ENCODE measurements at regions of chr5 and their contacts with region 1.

Region 1: DNA sequence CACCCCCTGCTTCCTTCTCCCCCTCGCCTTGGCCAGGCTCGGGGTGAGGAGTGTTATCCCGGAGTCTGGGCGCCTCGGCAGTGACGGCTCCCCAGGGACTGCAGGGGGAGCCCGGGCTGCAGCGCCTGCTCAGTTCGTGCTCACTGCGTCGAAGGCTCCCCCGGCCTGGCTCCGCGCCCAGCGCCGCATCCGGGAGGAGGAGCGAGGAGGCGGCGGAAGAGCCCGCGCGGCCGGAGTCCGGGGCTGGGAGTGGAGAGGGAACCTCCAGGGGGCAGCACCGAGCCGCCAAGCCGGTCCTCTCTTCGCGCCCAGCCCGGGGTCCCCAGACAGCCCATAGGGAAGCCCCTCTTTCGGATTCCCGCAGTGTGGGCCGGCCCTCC is 1.3 kb upstream of the EGR1 start:
- DNase-seq: peak; percentile 80 to 91
- ATAC-seq: peak; percentile 53 to 58
- H3K4me3 ChIP-seq: peak overlapping the region; percentile 78 to 98 (median 90)
- H3K27ac ChIP-seq: peak overlapping the region; percentile 94 to 99 (median 96)
- H3K4me1 ChIP-seq: peaks cover 14 to 22% of the 10 kb centered on the region in 2 donors
- H3K27me3 ChIP-seq: peaks cover 0 to 6% (median 0%) of the 10 kb centered on the region in 3 donors
- CTCF ChIP-seq: peak; percentile 95 to 99 (median 96)
- POLR2A ChIP-seq: peak in 1 of 2 donors; percentile 26

Region 2: GRCh38 chr5:138491669-138492559 is 27.9 kb after region 1 on chr5:
- in situ Hi-C with region 1: no loop called
- intact Hi-C with region 1: loop called (anchors 1 kb)
- DNase-seq: peak; percentile 79 to 87
- ATAC-seq: peak; percentile 92 to 93
- H3K4me3 ChIP-seq: peak overlapping the region; percentile 60 to 85 (median 64)
- H3K27ac ChIP-seq: peak overlapping the region; percentile 34 to 63 (median 56)
- H3K4me1 ChIP-seq: peaks cover 14 to 17% of the 10 kb centered on the region in 2 donors
- H3K27me3 ChIP-seq: peaks cover 28 to 40% (median 29%) of the 10 kb centered on the region in 3 donors
- CTCF ChIP-seq: peak in 2 of 5 experiments; percentile 8 to 11
- POLR2A ChIP-seq: peak in 1 of 2 donors; percentile 23

Region 3: DNA sequence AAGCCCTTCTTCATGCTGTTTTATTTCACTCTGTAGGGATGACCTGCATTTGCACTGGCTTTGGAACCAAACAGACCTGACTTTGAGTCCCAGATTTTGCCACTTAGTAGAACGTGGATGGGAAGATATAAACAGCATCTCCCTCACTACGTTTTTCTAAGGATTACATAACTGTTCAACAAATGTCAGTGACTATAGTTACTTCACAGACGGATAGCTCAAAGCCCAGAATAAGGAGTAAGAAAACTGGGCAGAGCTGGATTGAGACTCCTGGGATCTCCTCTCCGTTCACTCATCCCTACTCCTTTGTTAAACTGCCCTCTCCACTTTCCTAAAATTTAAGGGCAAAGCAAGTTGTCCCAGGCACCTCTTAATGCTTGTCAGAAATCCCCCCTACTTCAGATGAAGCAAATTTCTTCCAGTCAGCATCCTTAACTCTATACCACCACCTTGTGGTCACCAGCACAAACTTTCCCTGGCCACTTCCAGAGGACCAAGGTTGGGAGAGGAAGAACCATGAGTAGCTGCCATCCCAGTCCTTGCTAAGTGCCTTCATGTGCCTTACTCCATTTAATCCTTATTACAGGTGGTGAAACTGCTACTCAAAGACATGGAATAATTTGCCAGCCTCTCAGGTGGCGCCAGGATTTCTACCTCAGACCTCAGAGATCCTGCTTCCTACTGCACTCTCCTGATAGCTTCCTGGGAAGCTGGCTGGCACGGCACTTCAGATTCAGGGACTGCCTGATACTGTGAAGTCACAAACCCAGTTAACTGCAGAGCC is 39.7 kb after region 1 on chr5:
- in situ Hi-C with region 1: loop called in 2 of 4 experiments (anchors 5 kb)
- intact Hi-C with region 1: loop called (anchors 1 kb)
- DNase-seq: no peak
- ATAC-seq: peak; percentile 70 to 74
- H3K4me3 ChIP-seq: no peak overlapping the region
- H3K27ac ChIP-seq: peak overlapping the region in 2 of 4 donors; percentile 26 to 60
- H3K4me1 ChIP-seq: peaks cover 12 to 16% of the 10 kb centered on the region in 2 donors
- H3K27me3 ChIP-seq: no peaks in the 10 kb centered on the region
- CTCF ChIP-seq: peak; percentile 70 to 86 (median 80)
- POLR2A ChIP-seq: no peak

Region 4: DNA sequence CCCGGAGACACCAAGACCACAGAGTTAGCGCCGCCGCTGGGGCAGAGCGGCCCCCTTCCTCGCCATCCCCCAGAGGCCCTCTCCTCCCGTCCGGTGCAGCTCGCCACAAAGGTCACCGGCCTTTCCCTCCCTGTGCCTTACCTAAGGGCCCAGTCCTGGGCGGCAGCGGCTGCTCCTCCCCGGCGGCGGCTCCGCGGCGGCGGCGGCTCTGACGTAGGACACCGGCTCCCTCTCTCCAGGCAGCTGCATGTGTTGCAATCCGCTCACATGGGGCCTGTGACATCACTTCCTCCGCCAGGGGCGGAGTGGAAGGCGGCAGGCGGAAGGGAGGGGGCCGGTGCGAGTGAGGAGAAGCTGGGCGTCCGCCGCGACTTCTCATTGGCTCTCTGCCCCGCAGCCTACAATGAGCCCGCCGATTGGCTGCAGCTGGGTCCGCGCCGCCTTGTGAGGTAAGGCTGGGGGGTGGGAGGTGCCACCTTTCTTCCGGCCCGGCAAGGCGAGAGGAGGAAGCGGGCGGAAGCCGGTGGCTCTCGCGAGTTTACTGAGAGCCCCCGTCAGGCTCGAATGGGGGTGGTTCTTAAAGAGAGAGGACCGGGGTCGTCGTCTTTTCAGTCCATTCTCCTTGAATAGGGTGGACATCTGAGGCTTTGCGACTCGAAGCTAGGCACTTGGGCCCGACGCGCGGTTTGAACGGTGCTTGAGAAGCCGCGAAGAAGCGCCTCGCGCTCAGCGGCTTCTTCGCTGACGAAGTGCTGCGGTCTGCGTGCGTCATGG is 79.1 kb after region 1 on chr5 and contains the start of gene ETF1:
- in situ Hi-C with region 1: no loop called
- intact Hi-C with region 1: loop called (anchors 1 kb)
- DNase-seq: peak; percentile 100
- ATAC-seq: peak; percentile 86 to 87
- H3K4me3 ChIP-seq: peak within 1 kb of the TSS; percentile 85 to 98 (median 96)
- H3K27ac ChIP-seq: peak within 1 kb of the TSS; percentile 97 to 100 (median 98)
- H3K4me1 ChIP-seq: peaks cover 72 to 73% of the 10 kb centered on the region in 2 donors
- H3K27me3 ChIP-seq: no peaks in the 10 kb centered on the region
- CTCF ChIP-seq: peak in 1 of 5 experiments; percentile 17
- POLR2A ChIP-seq: peak; percentile 100
- total RNA-seq, gene ETF1: 99.9 to 139 (median 117) TPM

Region 5: DNA sequence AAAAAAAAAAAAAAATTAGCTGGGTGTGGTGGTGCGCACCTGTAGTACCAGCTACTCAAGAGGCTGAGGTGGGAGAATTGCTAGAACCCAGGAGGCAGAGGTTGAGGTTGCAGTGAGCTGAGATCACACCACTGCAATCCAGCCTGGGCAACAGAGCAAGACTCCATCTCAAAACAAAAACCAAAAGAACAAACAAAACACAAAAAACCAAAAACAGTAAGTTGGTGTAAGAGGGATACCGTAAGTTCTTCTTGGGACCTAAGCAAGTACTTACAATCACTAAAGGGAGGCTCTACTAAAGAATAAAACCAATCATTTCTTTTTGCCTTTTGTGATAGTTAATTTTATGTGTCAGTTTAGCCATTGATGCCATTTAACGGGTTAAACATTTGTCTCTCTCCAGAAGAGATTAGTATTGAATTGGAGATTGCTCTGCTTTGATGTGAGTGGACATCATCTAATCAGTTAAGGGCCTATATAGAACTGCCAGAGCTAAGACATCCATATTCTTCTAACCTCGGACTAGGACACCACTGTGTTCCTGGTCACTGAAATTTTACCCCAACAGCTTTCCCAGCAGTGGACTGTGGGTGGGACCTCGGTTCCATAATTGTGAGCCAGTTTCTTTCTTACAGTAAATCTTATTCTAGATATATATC is 89.6 kb after region 1 on chr5:
- in situ Hi-C with region 1: no loop called
- intact Hi-C with region 1: no loop called
- DNase-seq: no peak
- ATAC-seq: no peak
- H3K4me3 ChIP-seq: no peak overlapping the region
- H3K27ac ChIP-seq: no peak overlapping the region
- H3K4me1 ChIP-seq: peaks cover 0 to 1% of the 10 kb centered on the region in 2 donors
- H3K27me3 ChIP-seq: no peaks in the 10 kb centered on the region
- CTCF ChIP-seq: no peak
- POLR2A ChIP-seq: no peak

Measured in gastrocnemius medialis (tissue), 4 donors.